ENCODE measurements at regions of chr1 and their contacts with region 1.

Region 1: GRCh38 chr1:15975805-15976680 is at the start of gene ZBTB17:
- DNase-seq: peak; percentile 97
- H3K4me3 Mint-ChIP-seq: peak within 1 kb of the TSS; percentile 87
- H3K27ac Mint-ChIP-seq: peak within 1 kb of the TSS; percentile 94
- H3K4me1 Mint-ChIP-seq: peaks cover 38% of the 10 kb centered on the region
- H3K27me3 Mint-ChIP-seq: no peaks in the 10 kb centered on the region
- total RNA-seq, gene ZBTB17: 52.7 to 58.8 TPM

Region 2: DNA sequence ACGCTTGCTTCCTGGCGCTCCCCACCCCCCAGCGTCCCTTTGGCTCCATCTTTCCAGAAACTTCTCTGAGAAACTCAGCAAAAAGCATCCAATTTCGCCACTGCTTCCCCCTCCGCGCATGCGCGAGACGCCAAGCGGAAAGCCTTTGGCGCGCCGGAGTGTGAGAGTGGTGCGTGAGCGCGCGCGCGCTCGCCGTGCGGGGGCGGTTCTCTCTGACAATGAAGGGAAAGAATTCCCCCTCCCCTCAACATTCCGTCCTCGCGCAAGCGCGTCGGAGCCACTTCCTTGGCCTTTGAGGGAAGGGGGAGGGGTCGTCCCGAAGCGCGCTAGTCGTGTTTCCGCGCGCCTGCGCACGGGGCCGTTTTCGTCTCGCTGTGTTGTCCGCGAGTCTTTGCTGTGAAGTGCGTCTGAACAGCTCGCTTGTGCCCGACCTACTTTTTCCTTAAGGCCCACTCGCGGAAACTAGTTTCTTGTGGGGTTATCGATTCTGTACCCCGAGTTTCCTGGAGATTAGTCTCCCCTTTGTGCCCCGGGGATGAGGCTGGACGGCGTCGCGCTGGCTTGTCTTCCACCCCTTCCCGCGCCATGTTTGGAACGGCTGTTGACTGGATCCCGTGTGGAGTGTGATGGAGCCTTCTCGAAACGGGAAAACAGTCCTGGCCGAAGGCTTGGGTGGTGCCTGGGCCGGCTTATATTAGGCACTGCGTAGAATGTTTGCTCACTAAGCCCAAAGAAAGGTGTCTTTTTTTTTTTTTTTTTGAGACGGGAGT is 140.1 kb before region 1 on chr1:
- CTCF ChIA-PET with region 1: interaction called, 3 read pairs
- POLR2A ChIA-PET with region 1: interaction called, 14 read pairs
- intact Hi-C with region 1: loop called (anchors 1 kb)
- DNase-seq: peak; percentile 100
- H3K4me3 Mint-ChIP-seq: peak overlapping the region; percentile 81
- H3K27ac Mint-ChIP-seq: peak overlapping the region; percentile 96
- H3K4me1 Mint-ChIP-seq: peaks cover 18% of the 10 kb centered on the region
- H3K27me3 Mint-ChIP-seq: no peaks in the 10 kb centered on the region

Region 3: GRCh38 chr1:15957228-15958095 is 18.6 kb before region 1 on chr1:
- CTCF ChIA-PET with region 1: no interaction called
- POLR2A ChIA-PET with region 1: interaction called, 10 read pairs
- intact Hi-C with region 1: no loop called
- DNase-seq: no peak
- H3K4me3 Mint-ChIP-seq: no peak overlapping the region
- H3K27ac Mint-ChIP-seq: peak overlapping the region; percentile 55
- H3K4me1 Mint-ChIP-seq: peaks cover 86% of the 10 kb centered on the region
- H3K27me3 Mint-ChIP-seq: no peaks in the 10 kb centered on the region

Measured in activated CD4-positive, alpha-beta memory T cell treated with anti-CD3 and anti-CD28 coated beads for 36 hours (primary cell).